ENCODE measurements at regions of chr4 and their contacts with region 1.

Region 1: DNA sequence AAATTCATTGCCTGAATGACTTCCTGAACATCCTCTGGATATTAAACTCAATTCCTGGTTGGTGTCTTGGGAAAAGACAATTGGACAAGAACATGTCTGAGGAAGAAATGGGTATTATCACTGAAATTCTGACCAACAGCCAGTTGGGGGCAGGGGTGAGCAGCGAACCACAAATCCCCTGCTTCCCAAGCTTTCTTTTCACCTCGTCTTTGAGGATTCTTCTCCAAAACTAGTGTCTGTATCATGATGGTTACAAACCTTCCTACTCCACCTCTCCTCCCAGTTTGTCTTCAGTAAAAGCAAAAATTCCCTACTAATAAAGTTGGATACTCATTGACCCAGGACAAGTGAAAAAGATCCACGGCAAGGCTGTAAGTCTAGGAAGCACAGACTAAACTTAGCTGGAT is 48.3 kb upstream of the WDR1 start:
- DNase-seq: peak; percentile 42
- ATAC-seq: peak; percentile 82
- H3K4me3 ChIP-seq: no peak overlapping the region
- H3K27ac ChIP-seq: no peak overlapping the region
- H3K4me1 ChIP-seq: peaks cover 3% of the 10 kb centered on the region; the same call in 1 of the 2 replicates
- H3K27me3 ChIP-seq: peaks cover 3% of the 10 kb centered on the region; the same call in 1 of the 2 replicates
- CTCF ChIP-seq: peak; percentile 71
- POLR2A ChIP-seq: no peak
- RAD21 ChIP-seq: peak; percentile 78

Region 2: GRCh38 chr4:10151182-10151581 is 13.7 kb before region 1 on chr4:
- CTCF ChIA-PET with region 1: no interaction called
- POLR2A ChIA-PET with region 1: no interaction called
- dilution Hi-C with region 1: no loop called
- in situ Hi-C with region 1: no loop called
- intact Hi-C with region 1: no loop called
- DNase-seq: no peak
- ATAC-seq: no peak
- H3K4me3 ChIP-seq: no peak overlapping the region
- H3K27ac ChIP-seq: no peak overlapping the region
- H3K4me1 ChIP-seq: no peaks in the 10 kb centered on the region
- H3K27me3 ChIP-seq: peaks cover 16% of the 10 kb centered on the region
- CTCF ChIP-seq: no peak
- POLR2A ChIP-seq: no peak
- RAD21 ChIP-seq: no peak

Region 3: DNA sequence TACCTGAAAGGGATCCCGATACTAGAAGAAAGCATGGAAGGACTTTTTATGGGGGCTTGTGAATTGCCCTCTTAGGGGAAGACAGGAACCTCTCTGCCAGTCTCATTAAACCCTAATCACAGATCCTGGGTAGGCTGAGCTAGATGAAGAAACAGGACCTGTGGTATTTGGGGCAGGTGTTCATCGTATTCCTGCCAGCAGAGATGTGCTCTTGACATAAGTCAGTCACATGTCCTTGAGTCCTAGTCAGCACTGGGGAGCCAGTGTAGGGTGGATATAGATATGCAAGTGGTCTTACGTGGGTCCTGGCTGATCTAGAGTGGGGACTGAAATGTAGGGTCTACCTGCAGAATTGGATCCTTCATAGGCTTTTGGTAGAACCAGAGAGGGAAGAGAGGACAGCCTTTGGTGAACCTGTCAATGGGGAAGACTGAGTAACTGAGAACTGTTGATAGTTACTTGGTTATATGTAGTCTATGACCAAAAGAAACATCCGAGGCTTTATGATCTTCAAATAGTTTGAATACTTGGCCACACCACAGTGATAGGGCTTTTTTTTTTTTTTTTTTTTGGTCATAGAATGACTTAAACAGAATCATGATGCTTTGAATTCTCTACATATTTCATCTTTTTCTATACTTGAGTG is 15.2 kb after region 1 on chr4:
- CTCF ChIA-PET with region 1: no interaction called
- POLR2A ChIA-PET with region 1: no interaction called
- dilution Hi-C with region 1: no loop called
- in situ Hi-C with region 1: no loop called
- intact Hi-C with region 1: no loop called
- DNase-seq: peak; percentile 40
- ATAC-seq: peak; percentile 59
- H3K4me3 ChIP-seq: no peak overlapping the region
- H3K27ac ChIP-seq: no peak overlapping the region
- H3K4me1 ChIP-seq: peaks cover 11% of the 10 kb centered on the region; the same call in 1 of the 2 replicates
- H3K27me3 ChIP-seq: no peaks in the 10 kb centered on the region
- CTCF ChIP-seq: no peak
- POLR2A ChIP-seq: no peak
- RAD21 ChIP-seq: no peak

Region 4: GRCh38 chr4:10321931-10322330 is 157.1 kb after region 1 on chr4:
- CTCF ChIA-PET with region 1: no interaction called
- POLR2A ChIA-PET with region 1: no interaction called
- dilution Hi-C with region 1: no loop called
- in situ Hi-C with region 1: no loop called
- intact Hi-C with region 1: no loop called
- DNase-seq: no peak
- ATAC-seq: no peak
- H3K4me3 ChIP-seq: no peak overlapping the region
- H3K27ac ChIP-seq: no peak overlapping the region
- H3K4me1 ChIP-seq: no peaks in the 10 kb centered on the region
- H3K27me3 ChIP-seq: no peaks in the 10 kb centered on the region
- CTCF ChIP-seq: no peak
- POLR2A ChIP-seq: no peak
- RAD21 ChIP-seq: no peak

Region 5: DNA sequence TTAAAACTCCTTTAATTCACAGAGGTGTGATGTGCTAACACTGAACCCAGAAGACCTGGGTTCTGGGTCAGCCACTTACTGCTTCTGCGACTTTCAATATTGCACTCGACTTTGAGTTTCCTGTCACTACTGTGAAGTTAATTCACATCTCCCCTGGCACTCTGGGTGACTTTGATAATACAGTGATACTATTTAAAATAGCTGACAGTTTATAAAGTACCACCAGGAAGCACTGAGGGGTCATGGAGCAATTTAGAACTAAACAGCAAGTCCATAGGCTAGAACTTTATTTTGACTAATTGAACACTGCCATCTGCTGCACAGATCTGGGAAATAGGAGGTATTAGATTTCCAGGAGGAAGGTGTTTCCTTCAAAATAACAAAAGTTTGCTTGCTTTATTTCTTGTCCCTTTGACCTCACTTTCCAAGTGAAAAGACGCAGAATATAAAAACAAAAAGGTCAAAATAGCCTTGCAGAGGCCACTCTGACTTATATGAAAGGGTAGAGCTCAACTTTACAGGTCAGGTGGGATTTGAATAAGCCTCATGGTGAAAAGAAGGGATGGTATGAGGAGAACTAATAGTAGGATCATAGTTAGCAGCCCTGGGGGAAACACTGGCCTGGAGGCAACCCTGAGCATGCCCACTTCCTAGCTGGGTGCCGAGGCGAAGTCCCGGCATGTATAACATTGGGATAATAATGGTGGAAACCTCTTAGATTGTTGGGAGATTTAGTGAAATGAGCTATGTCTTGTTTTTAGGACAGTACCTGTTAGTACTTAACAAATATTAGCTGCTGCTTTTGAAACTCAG is 239.0 kb after region 1 on chr4:
- CTCF ChIA-PET with region 1: interaction called, 4 read pairs
- POLR2A ChIA-PET with region 1: no interaction called
- dilution Hi-C with region 1: loop called (anchors 25 kb)
- in situ Hi-C with region 1: loop called (anchors 5 kb)
- intact Hi-C with region 1: loop called (anchors 1 kb)
- DNase-seq: peak; percentile 30
- ATAC-seq: peak; percentile 77
- H3K4me3 ChIP-seq: no peak overlapping the region
- H3K27ac ChIP-seq: no peak overlapping the region
- H3K4me1 ChIP-seq: no peaks in the 10 kb centered on the region
- H3K27me3 ChIP-seq: no peaks in the 10 kb centered on the region
- CTCF ChIP-seq: peak; percentile 55
- POLR2A ChIP-seq: no peak
- RAD21 ChIP-seq: peak; percentile 61

Region 6: GRCh38 chr4:10535912-10536311 is 371.0 kb after region 1 on chr4:
- CTCF ChIA-PET with region 1: interaction called, 4 read pairs
- POLR2A ChIA-PET with region 1: no interaction called
- dilution Hi-C with region 1: no loop called
- in situ Hi-C with region 1: no loop called
- intact Hi-C with region 1: loop called (anchors 2 kb)
- DNase-seq: no peak
- ATAC-seq: no peak
- H3K4me3 ChIP-seq: no peak overlapping the region
- H3K27ac ChIP-seq: no peak overlapping the region
- H3K4me1 ChIP-seq: no peaks in the 10 kb centered on the region
- H3K27me3 ChIP-seq: peaks cover 5% of the 10 kb centered on the region; the same call in 1 of the 2 replicates
- CTCF ChIP-seq: no peak
- POLR2A ChIP-seq: no peak
- RAD21 ChIP-seq: no peak

Region 7: DNA sequence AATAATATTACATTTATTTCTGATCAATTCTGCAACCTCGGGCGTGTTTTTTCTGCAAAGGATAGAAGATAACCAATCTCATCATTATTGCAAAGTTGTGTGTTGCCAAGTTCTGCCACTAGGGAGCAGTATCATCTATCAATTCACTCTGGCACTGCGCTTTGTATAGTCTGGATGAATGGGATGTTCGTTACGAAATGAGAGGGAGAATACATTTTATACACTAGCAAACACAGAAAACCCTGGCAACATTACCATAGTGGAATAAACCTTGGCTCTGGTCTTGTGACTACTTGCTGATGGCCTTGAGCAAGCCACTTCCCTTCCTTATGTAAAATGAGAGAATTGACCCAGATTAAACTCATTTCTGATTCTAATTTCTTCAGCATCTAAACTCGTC is 389.8 kb after region 1 on chr4:
- CTCF ChIA-PET with region 1: no interaction called
- POLR2A ChIA-PET with region 1: no interaction called
- dilution Hi-C with region 1: no loop called
- in situ Hi-C with region 1: loop called (anchors 5 kb)
- intact Hi-C with region 1: no loop called
- DNase-seq: peak; percentile 59
- ATAC-seq: peak; percentile 90
- H3K4me3 ChIP-seq: no peak overlapping the region
- H3K27ac ChIP-seq: no peak overlapping the region
- H3K4me1 ChIP-seq: no peaks in the 10 kb centered on the region
- H3K27me3 ChIP-seq: no peaks in the 10 kb centered on the region; the same call in 1 of the 2 replicates
- CTCF ChIP-seq: peak; percentile 84
- POLR2A ChIP-seq: no peak
- RAD21 ChIP-seq: peak; percentile 83

Region 8: DNA sequence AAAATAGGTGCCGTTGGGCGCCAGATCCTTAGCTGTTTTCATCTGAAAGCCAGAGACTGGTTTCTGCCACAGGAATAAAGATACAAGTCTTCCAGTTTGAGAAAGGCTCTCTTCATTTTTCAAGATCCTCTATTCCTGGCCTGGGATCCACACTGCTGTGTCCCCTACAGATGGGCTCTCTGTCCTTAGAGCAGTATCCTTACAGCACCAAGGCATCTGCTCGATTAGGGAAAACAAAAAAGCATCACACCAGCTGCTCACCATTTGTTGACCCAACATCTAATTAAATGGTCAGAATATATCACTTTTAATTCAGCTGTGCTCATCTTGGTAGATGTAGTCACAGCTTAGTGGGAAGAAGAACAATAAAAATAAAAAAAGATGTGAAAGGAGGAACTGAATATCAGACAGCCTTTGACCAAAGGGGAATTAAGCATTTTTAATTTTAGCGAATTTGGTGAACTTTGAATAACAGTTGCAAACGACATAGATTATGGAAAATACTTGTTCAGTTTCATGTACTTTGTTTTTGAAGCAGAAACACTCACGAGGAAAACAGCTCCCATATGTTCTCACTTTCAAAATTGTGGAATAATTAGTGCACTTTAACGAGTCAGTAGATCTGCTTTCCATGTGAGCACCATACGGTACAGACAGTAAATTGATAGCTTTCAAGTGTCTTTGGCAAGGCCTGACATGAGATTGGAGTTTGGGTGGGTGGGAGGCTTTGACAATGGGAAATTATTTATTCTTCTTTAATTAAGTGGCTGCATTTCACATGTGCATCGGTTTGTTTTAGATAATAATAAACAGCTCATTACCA is 668.1 kb after region 1 on chr4:
- CTCF ChIA-PET with region 1: no interaction called
- POLR2A ChIA-PET with region 1: no interaction called
- dilution Hi-C with region 1: no loop called
- in situ Hi-C with region 1: no loop called
- intact Hi-C with region 1: no loop called
- DNase-seq: no peak
- ATAC-seq: no peak
- H3K4me3 ChIP-seq: no peak overlapping the region
- H3K27ac ChIP-seq: no peak overlapping the region
- H3K4me1 ChIP-seq: no peaks in the 10 kb centered on the region
- H3K27me3 ChIP-seq: no peaks in the 10 kb centered on the region
- CTCF ChIP-seq: no peak
- POLR2A ChIP-seq: no peak
- RAD21 ChIP-seq: no peak

Measured in IMR-90 (cell line).